ENCODE measurements at regions of chr6 and their contacts with region 1.

Region 1: DNA sequence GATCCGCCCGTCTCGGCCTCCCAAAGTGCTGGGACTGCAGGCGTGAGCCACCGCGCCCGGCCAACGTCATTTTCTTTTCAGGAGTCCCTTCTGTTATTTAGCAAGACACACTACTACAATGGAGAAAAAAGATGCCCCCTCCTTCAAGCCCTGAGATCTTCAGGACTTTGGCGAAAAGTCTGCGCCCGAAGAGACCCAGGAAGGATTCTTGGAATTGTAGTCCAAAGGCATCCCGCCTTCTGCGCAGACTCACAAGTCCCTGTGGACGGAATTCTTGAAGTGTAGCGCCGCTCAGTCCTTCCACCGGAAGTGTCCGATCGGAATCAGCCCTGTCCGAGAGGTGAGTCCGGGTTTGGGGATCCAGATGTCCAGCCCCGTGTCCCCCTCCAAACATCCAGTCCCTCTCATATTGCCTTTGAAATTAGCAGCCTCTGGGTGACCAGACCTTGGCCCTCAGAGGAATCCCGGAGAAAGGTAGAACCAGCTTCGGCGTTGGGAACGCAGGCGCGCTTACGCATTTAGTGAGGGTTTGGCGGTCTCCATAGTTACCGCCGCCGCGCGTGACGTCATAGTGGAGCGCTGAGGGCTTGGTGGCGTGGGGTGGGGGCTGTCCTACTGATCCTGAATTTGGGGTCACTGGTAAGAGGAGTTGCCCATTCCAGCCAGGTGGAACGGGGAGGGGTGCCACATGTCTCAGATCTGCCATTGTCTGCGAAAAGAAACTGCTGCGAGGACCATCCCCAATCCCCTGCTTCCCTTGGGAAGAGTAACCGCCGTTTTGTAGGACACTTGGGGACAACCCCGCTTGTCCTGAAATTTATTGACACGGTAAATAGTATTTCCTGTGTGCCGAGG is 490 bp downstream of the ZNF165 start:
- H3K4me3 Mint-ChIP-seq: peak overlapping the region; percentile 97
- H3K27ac Mint-ChIP-seq: peak overlapping the region; percentile 97
- H3K4me1 Mint-ChIP-seq: peaks cover 18% of the 10 kb centered on the region
- H3K27me3 Mint-ChIP-seq: peaks cover 2% of the 10 kb centered on the region

Region 2: DNA sequence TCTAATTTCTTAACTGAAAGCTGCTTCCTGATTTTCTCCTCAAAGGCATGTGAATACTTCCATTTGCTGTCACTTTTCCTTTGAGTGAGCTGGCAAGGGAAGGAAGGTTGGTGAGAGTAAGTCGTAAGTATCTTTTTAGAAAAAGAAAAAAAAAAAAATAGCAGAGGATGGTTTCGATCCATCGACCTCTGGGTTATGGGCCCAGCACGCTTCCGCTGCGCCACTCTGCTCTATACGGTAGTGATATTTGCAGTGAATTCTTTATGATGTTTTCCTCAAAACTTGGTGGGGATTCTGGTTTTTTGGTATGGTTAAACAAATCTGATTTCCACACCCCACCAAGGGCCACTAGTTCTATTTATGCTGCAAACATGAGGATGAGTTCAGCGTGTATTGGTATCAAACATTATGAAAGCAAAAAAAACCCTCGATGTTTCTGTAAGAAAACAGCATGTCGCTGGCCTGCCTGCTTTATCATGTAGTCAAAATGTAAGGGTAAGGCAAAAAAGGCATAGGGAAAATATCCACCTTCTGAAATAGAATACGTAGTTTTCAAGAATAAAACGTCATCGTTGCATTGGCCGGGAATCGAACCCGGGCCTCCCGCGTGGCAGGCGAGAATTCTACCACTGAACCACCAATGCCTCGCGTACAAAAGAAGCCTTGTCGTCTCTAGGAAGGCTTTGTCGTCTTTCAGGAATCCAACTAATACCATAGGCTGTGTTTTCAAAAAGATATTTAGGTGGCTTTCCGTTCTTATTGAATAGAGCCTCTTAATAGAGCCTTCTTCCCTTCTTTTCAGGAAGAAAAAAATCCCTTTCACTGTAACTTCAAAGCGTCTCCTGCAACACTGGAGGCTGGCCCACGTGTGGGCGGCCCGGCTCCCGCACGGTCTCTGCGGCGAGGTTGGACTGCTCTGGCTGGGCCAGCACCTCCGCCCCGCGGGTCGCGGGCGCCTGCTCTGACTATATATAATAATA is 178.2 kb before region 1 on chr6:
- intact Hi-C with region 1: loop called (anchors 5 kb)
- H3K4me3 Mint-ChIP-seq: peak overlapping the region; percentile 78
- H3K27ac Mint-ChIP-seq: peak overlapping the region; percentile 66
- H3K4me1 Mint-ChIP-seq: no peaks in the 10 kb centered on the region
- H3K27me3 Mint-ChIP-seq: peaks cover 6% of the 10 kb centered on the region

Region 3: DNA sequence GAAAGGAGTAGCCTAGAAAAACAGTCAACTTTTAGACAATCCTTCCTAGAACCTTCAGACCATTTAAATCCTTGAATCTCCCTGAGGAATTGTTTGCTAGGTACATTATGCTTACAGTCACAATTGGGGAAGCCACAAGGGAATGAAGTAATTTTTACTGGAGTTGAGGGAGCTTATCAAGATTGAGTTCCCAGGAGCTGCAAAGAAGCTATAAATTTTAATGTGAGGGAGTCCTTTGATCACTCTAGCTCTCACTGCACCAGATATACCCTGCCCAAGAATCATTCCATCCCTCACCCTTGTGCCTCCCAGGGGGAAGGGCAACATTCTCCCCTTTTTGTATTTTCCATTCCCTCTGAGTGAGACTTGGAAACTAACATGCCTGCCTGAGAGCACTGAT is 12.8 kb before region 1 on chr6:
- intact Hi-C with region 1: no loop called
- H3K4me3 Mint-ChIP-seq: no peak overlapping the region
- H3K27ac Mint-ChIP-seq: no peak overlapping the region
- H3K4me1 Mint-ChIP-seq: no peaks in the 10 kb centered on the region
- H3K27me3 Mint-ChIP-seq: peaks cover 21% of the 10 kb centered on the region

Region 4: GRCh38 chr6:28104392-28105244 is 23.8 kb after region 1 on chr6:
- intact Hi-C with region 1: loop called (anchors 1 kb)
- H3K4me3 Mint-ChIP-seq: peak overlapping the region; percentile 85
- H3K27ac Mint-ChIP-seq: peak overlapping the region; percentile 85
- H3K4me1 Mint-ChIP-seq: peaks cover 7% of the 10 kb centered on the region
- H3K27me3 Mint-ChIP-seq: peaks cover 17% of the 10 kb centered on the region

Region 5: GRCh38 chr6:28124102-28124970 is 43.5 kb after region 1 on chr6 and contains the start of gene ZSCAN16:
- intact Hi-C with region 1: loop called (anchors 5 kb)
- H3K4me3 Mint-ChIP-seq: peak within 1 kb of the TSS; percentile 89
- H3K27ac Mint-ChIP-seq: peak within 1 kb of the TSS; percentile 84
- H3K4me1 Mint-ChIP-seq: peaks cover 34% of the 10 kb centered on the region
- H3K27me3 Mint-ChIP-seq: no peaks in the 10 kb centered on the region

Region 6: DNA sequence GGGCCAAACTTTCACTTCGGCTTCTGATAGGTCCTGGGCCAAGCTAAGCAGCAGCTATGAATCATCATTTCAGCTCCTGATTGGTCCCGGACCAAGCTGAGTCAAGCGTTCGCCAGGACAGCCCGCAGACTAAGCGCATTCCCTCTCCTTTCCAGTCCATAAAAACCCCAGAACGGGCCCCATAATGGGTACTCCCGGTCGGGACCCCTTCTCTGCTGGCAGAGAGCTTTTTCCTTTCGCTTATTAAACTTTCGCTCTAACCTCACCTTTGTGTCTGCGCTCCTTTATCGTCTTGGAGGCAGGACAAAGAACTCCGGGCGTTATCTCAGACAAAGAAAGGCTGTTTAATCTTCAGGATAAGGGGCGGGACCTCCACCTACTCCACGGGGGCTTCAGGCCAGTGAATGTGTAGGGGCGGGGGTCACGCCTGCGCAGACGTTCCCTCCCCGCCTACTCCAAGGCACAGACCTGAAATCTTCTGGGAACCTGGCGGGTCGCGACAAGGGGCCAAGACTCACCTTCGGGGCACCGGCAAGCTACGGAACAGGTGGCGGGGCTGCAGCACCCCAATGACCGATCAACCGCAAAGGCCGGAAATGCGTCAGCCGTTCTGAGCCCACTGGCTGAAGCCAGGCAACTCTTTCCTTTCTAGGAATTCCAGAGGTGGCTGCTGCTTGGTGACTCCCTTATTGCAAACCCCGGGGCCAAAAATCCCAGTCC is 254.9 kb after region 1 on chr6 and contains the start of gene ZSCAN31:
- intact Hi-C with region 1: loop called (anchors 1 kb)
- H3K4me3 Mint-ChIP-seq: no peak within 1 kb of the TSS
- H3K27ac Mint-ChIP-seq: no peak within 1 kb of the TSS
- H3K4me1 Mint-ChIP-seq: peaks cover 25% of the 10 kb centered on the region
- H3K27me3 Mint-ChIP-seq: peaks cover 2% of the 10 kb centered on the region

Region 7: DNA sequence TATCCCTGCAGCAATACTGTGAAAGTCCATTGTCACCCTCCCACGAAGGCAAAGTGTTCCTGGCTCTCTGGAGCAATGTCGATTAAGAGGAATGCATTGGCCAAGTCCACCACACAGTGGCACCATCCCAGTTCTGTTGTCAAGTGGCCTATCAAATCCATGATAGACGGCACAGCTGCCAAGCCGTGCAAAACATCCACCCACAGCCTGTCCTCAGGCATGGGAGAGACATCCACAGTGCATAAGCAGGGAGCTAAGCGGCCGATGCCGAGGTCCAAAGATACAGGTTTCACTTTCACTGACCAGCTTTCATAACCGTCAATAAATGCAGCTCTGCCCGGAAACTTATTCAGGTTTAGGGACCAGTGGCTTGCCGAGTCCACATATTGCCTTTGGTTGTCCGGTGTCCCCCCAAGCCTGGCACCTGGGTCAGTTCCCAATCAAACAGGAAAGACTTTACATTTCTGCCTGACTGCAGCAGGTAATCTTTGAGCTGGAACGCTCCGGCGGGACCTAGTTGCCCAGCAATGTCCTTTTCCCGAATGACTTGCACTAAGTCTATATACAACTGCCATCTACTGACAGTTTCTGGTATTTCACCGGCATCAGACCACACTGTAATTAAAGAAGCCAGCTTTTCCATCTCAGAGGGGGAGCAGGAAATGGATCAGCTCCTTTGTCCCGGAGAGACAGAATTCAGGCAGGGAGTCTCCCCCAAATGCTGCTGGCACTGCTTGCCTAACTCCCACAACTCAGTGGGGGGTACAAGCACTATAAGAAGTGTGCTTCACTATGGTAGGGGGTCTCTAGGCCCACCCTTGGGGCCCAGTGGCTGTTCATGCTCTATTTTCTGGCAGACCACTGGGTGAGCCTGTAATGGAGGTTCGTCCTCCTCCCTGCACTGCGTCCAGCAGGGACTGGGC is 275.1 kb after region 1 on chr6:
- intact Hi-C with region 1: loop called (anchors 2 kb)
- H3K4me3 Mint-ChIP-seq: peak overlapping the region; percentile 82
- H3K27ac Mint-ChIP-seq: peak overlapping the region; percentile 87
- H3K4me1 Mint-ChIP-seq: peaks cover 62% of the 10 kb centered on the region
- H3K27me3 Mint-ChIP-seq: no peaks in the 10 kb centered on the region